Activated CD4-positive, alpha-beta memory T cell treated with anti-CD3 and anti-CD28 coated beads for 36 hours (primary cell): ENCODE measurements at regions of chr2 and their contacts with region 1.

Region 1: GRCh38 chr2:191677646-191678436 is at the start of gene NABP1:
- DNase-seq: peak; percentile 99
- H3K4me3 Mint-ChIP-seq: peak within 1 kb of the TSS; percentile 96
- H3K27ac Mint-ChIP-seq: peak within 1 kb of the TSS; percentile 99
- H3K4me1 Mint-ChIP-seq: peaks cover 46% of the 10 kb centered on the region
- H3K27me3 Mint-ChIP-seq: peaks cover 2% of the 10 kb centered on the region
- total RNA-seq, gene NABP1: 65.1 to 65.4 TPM

Region 2: GRCh38 chr2:189783927-189784867 is 1893.6 kb before region 1 on chr2 and contains the starts of genes ORMDL1 and PMS1:
- CTCF ChIA-PET with region 1: no interaction called
- POLR2A ChIA-PET with region 1: no interaction called
- intact Hi-C with region 1: loop called (anchors 5 kb)
- DNase-seq: peak; percentile 96
- H3K4me3 Mint-ChIP-seq: peak within 1 kb of the TSS; percentile 90
- H3K27ac Mint-ChIP-seq: peak within 1 kb of the TSS; percentile 95
- H3K4me1 Mint-ChIP-seq: peaks cover 52% of the 10 kb centered on the region
- H3K27me3 Mint-ChIP-seq: no peaks in the 10 kb centered on the region
- total RNA-seq, gene ORMDL1: 47.0 to 49.8 TPM
- total RNA-seq, gene PMS1: 36.0 to 38.6 TPM

Region 3: GRCh38 chr2:191013932-191014652 is 663.7 kb before region 1 on chr2 and contains the start of gene STAT1:
- CTCF ChIA-PET with region 1: no interaction called
- POLR2A ChIA-PET with region 1: interaction called, 3 read pairs
- intact Hi-C with region 1: loop called (anchors 1 kb)
- DNase-seq: peak; percentile 97
- H3K4me3 Mint-ChIP-seq: no peak within 1 kb of the TSS
- H3K27ac Mint-ChIP-seq: no peak within 1 kb of the TSS
- H3K4me1 Mint-ChIP-seq: peaks cover 39% of the 10 kb centered on the region
- H3K27me3 Mint-ChIP-seq: no peaks in the 10 kb centered on the region
- total RNA-seq, gene STAT1: 309 to 314 TPM

Region 4: DNA sequence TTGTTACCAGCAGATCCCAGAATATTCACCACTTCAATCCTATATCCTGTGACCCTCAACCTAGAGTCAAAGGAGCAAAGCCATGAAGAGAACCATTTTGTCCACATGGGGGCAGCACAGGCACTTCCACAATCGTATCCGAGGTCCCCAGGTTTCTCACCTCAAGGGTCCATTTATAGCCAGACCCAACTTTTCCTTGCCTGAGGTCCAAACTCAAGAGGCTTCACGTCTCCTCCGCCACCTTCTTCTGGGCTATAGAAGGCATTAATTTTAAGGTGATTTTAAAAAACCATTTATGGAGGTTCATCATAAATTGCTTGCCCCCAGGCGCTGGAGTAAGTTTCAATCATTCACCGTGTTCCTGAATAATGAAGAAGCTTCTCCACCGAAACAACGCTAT is 111.5 kb before region 1 on chr2:
- CTCF ChIA-PET with region 1: interaction called, 9 read pairs
- POLR2A ChIA-PET with region 1: interaction called, 19 read pairs
- intact Hi-C with region 1: loop called (anchors 1 kb)
- DNase-seq: peak; percentile 75
- H3K4me3 Mint-ChIP-seq: no peak overlapping the region
- H3K27ac Mint-ChIP-seq: no peak overlapping the region
- H3K4me1 Mint-ChIP-seq: peaks cover 21% of the 10 kb centered on the region
- H3K27me3 Mint-ChIP-seq: peaks cover 4% of the 10 kb centered on the region

Region 5: DNA sequence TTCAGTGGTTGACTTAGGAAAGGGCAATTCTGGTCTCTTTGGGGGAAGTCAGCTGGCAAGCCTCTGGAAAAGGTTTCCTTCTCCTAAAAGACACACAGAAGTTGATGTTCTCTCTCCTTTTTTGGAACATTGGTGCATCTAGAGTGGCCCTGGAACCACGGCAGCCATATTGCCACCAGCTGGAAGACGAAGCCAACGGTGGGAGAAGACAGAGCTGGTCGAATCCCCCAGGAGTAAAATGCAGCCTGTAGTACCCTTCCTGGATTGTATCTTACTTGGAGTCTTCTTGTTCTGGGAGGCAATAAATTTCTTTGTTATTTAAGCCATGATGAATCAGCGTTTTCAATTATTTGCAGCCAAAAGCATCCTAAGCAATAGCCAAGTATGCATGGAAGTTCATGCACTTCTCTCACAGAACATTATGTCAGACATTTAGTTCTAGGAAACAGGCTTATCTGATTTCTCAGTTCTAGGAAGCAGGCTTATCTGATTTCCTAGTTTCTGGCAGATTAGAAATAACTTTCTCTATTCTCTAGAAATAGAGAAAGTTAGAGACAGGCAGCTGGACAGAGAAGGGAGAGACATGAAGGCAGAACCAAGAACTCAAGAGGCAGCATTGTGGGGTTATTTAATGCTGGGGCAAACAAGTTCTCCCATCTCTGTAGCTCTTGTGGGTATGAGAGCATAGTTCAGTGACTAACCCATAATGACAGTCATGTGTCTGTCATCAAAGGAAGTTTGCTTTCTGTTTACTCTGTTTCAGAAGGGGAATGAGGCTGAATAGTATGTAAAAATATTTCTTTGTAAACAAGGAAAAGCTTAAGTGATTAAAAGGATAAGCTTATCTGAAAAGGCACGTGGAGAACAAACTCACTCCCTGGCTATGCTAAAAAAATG is 40.4 kb before region 1 on chr2:
- CTCF ChIA-PET with region 1: interaction called, 13 read pairs
- POLR2A ChIA-PET with region 1: interaction called, 62 read pairs
- intact Hi-C with region 1: loop called (anchors 1 kb)
- DNase-seq: no peak
- H3K4me3 Mint-ChIP-seq: peak overlapping the region; percentile 49
- H3K27ac Mint-ChIP-seq: peak overlapping the region; percentile 89
- H3K4me1 Mint-ChIP-seq: peaks cover 58% of the 10 kb centered on the region
- H3K27me3 Mint-ChIP-seq: no peaks in the 10 kb centered on the region

Region 6: DNA sequence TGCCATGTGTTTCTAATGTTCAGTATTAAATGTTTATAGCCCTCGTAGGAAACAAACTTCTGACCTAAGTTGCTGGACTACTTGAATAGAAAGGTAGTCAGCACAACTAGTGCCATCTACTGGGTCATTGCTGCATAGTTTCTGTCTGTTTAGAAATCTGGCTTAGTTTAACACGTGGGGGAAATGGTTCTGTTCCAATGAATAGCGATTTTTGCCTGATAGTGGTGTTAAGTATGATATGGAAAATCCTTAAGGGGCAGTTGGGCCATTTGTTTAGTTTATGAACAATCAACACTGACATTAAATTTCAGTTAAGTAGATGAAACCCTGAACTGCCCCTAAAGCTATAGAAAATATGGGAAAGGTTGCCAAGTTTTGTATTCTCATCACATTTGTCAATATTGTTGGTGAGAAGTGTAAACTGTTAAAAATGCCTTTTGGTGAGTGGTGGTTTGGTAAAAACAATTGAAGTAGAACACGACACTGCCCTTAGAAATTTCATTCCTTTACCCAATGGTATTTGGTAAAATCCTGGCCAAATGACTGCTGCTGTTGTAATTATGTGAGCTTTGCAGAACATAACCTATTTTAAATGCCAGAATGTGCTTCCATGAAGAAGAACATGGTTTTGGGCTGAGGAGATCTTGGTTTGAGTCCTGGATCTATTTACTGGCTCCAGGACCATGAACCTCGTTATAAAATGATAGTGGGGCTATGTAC is 13.3 kb after region 1 on chr2:
- CTCF ChIA-PET with region 1: interaction called, 7 read pairs
- POLR2A ChIA-PET with region 1: interaction called, 24 read pairs
- intact Hi-C with region 1: loop called (anchors 1 kb)
- DNase-seq: peak; percentile 31
- H3K4me3 Mint-ChIP-seq: no peak overlapping the region
- H3K27ac Mint-ChIP-seq: peak overlapping the region; percentile 60
- H3K4me1 Mint-ChIP-seq: peaks cover 55% of the 10 kb centered on the region
- H3K27me3 Mint-ChIP-seq: no peaks in the 10 kb centered on the region

Region 7: DNA sequence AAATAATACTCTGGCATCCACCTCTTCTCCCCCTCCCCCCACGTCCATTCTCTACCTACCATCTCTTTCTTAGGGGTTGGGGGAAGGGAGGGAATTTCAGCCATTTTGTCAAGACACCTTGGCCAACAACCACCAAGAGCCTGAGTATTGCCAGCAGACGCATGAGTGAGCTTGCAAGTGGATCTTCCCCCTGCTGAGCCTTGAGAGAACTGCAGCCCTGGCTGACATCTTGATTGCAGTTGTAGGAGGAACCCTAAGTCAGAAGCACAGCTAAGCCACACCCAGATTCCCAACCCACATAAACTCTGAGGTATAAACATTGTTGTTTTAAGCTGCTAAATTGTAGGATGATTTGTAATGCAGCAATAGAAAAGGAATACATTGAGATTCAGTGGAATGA is 351.2 kb after region 1 on chr2:
- CTCF ChIA-PET with region 1: no interaction called
- POLR2A ChIA-PET with region 1: no interaction called
- intact Hi-C with region 1: no loop called
- DNase-seq: peak; percentile 23
- H3K4me3 Mint-ChIP-seq: no peak overlapping the region
- H3K27ac Mint-ChIP-seq: no peak overlapping the region
- H3K4me1 Mint-ChIP-seq: no peaks in the 10 kb centered on the region
- H3K27me3 Mint-ChIP-seq: no peaks in the 10 kb centered on the region